ENCODE measurements at regions of chr18 and their contacts with region 1.

Region 1: DNA sequence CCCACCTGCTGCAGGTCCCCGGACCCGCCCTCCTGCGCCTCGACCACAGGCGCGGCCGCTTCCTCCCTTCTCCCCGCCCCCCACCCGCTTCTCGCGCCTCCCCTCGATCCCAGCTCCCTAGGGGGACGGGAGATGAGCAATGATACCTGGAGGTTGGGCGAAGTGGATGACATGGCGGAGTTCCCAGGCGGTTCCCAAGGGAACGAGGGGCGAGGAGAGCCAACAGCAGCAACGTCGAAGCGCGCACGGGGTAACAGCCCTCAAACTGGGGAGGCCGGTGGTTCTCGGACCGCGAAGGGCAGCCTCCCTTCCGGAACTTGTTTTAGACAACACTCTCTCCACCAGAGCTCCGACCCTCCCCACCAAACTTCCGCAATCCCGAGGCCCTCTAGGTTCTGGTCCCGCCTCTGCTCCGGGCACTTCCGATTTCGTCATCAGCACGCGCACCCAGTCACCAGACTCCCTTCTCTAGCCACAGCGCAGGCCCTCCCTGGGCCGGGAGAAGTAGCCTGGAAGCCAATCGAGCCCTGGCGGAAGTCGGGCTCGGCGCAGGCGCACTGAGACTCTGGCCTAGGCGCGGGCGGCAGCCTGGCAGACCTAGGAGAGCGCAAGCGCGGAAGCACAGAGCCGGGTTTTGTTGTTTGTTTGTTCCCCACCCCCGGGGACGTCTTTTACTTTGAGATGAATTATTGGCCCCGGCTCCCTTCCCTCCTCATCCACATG is at the start of gene VPS4B:
- DNase-seq: peak; percentile 99
- H3K4me3 ChIP-seq: peak within 1 kb of the TSS; percentile 78 to 97 (median 90)
- H3K27ac ChIP-seq: peak within 1 kb of the TSS; percentile 92 to 96 (median 92)
- H3K4me1 ChIP-seq: peaks cover 7 to 18% of the 10 kb centered on the region in 2 donors
- H3K27me3 ChIP-seq: no peaks in the 10 kb centered on the region
- CTCF ChIP-seq: no peak
- POLR2A ChIP-seq: peak in 1 of 2 donors; percentile 87
- total RNA-seq, gene VPS4B: 36.0 to 50.5 (median 40.9) TPM

Region 2: GRCh38 chr18:63271881-63272299 is 150.4 kb before region 1 on chr18:
- intact Hi-C with region 1: no loop called
- DNase-seq: no peak
- H3K4me3 ChIP-seq: no peak overlapping the region
- H3K27ac ChIP-seq: peak overlapping the region in 2 of 3 donors; percentile 10 to 30
- H3K4me1 ChIP-seq: peaks cover 29 to 49% of the 10 kb centered on the region in 2 donors
- H3K27me3 ChIP-seq: no peaks in the 10 kb centered on the region
- CTCF ChIP-seq: no peak
- POLR2A ChIP-seq: no peak

Region 3: DNA sequence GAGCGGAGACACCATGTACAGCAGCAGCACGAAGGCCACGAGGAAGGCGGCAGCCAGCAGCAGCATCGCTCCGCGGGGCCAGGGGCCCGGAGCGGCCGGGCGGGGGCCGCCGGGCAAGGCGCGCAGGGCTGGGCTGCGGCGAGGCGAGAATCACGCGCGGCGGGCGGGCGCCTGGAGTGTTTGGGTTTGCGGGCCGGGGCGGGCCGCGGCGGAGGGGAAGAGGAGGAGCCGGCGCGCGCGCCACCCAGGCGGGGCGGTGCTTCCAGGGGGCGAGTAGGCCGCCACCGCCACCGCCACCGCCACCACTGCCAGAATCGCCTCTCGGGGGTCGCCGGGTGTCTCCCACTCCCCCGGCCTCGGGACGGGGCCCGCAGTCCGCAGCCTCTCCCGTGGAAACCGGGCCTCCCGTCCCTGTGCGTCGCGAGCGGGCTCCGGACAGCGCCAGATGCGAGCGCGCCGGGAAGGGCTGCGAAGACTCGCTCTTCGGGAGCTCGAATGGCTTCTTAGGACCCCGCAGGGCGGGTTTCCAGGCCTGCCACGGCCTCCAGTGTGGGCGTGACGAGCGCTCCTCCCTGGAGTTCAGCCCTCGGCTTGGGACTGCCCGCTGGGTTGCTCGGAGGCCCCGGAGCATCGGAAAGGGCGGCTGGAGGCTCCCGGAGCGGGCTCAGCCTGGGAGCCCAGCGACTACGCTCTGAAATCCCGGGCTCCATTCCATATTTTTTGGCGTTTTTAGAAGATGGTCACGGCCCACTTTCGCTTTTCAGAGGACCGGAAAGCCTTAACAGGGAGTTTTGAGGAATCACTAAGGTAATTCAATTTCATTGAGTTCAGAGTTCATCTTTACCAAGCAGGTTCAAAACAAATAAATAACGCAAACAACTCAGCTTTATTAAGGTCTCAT is 54.9 kb before region 1 on chr18 and contains the start of gene KDSR:
- intact Hi-C with region 1: loop called (anchors 5 kb)
- DNase-seq: peak; percentile 98
- H3K4me3 ChIP-seq: peak within 1 kb of the TSS; percentile 12 to 99 (median 77)
- H3K27ac ChIP-seq: peak within 1 kb of the TSS; percentile 93 to 99 (median 97)
- H3K4me1 ChIP-seq: peaks cover 10 to 22% of the 10 kb centered on the region in 2 donors
- H3K27me3 ChIP-seq: no peaks in the 10 kb centered on the region
- CTCF ChIP-seq: peak in 1 of 6 experiments; percentile 11
- POLR2A ChIP-seq: peak in 1 of 2 donors; percentile 90
- total RNA-seq, gene KDSR: 30.7 to 85.7 (median 46.8) TPM

Region 4: DNA sequence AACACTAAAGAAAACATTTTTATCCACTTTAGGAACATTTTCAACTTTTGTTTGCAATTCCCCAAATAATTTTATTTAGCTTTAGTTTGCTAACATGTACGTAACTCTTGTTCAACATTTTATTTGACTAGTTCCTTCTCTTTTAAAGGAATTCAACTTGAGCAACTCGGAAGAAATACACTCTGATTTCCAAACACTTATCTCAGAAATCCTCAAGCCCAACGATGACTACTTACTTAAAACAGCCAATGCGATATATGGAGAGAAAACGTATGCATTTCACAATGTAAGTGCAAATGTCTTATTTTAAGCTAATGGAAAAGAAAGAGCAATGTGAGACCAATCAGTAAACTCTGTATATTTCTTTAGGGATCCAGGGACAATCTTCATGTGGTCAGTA is 495.6 kb after region 1 on chr18:
- intact Hi-C with region 1: no loop called
- DNase-seq: no peak
- H3K4me3 ChIP-seq: no peak overlapping the region
- H3K27ac ChIP-seq: no peak overlapping the region
- H3K4me1 ChIP-seq: no peaks in the 10 kb centered on the region
- H3K27me3 ChIP-seq: no peaks in the 10 kb centered on the region
- CTCF ChIP-seq: no peak
- POLR2A ChIP-seq: no peak